IMR-90 (cell line): ENCODE measurements at regions of chr1 and their contacts with region 1.

Region 1: DNA sequence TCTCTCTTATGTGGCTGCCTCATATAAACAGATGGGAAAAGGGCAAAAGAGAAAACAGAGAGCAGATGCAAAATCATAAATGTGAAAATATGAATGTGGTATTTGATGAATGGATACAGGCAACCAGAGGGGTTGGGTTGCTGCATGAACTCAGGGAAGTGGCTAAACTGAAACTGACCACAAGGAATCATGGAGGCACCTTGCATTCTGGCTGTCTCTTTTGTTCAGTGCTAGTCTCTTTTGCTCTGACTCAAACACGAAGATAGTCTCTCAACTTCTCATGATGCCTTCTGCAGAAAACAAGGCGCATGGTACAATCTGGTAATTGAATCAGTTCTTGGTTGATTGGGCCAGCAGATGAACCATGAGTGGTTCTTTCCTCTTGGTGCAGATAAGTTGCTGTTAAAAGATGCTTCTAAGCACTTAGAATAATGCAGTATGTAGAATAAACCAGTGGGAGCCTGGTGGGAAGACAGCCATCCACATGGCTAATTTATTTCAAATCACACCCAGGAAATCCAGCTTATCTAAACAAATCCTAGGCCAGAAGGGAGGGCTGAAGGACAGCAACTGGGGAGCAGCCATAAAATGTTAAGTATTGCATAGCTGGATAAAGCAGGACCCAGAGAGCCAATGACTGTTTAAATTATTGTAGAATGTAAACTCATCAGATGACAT is 64.2 kb downstream of the HLX start:
- DNase-seq: no peak
- ATAC-seq: peak; percentile 29; the same call in 1 of the 2 replicates
- H3K4me3 ChIP-seq: no peak overlapping the region
- H3K27ac ChIP-seq: no peak overlapping the region
- H3K4me1 ChIP-seq: peaks cover 2% of the 10 kb centered on the region; the same call in 1 of the 2 replicates
- H3K27me3 ChIP-seq: no peaks in the 10 kb centered on the region; the same call in 1 of the 2 replicates
- CTCF ChIP-seq: no peak
- POLR2A ChIP-seq: no peak
- RAD21 ChIP-seq: no peak

Region 2: GRCh38 chr1:219518168-219518907 is 1425.1 kb before region 1 on chr1:
- CTCF ChIA-PET with region 1: no interaction called
- POLR2A ChIA-PET with region 1: no interaction called
- dilution Hi-C with region 1: no loop called
- in situ Hi-C with region 1: no loop called
- intact Hi-C with region 1: no loop called
- DNase-seq: peak; percentile 63
- ATAC-seq: peak; percentile 82
- H3K4me3 ChIP-seq: no peak overlapping the region
- H3K27ac ChIP-seq: no peak overlapping the region
- H3K4me1 ChIP-seq: peaks cover 2% of the 10 kb centered on the region; the same call in 1 of the 2 replicates
- H3K27me3 ChIP-seq: no peaks in the 10 kb centered on the region
- CTCF ChIP-seq: no peak
- POLR2A ChIP-seq: no peak
- RAD21 ChIP-seq: no peak

Region 3: DNA sequence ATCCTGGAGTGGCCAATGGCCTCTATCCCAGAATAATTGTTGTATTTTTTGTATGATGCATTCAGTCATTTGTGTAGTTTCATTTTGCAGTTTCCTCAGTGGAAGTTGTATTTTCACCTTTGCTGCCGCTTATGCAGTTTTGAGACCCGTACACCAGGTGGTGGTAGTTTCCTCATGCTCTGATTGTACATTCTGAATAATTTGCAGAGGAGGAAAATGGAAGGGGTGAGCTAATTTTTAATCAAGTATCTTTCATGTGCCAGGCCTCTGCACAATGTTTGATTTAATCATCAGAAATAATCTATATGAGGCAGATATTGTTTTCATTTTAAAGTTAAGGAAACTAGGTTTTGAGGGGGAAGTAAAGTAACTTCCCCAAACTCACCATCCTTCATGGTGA is 34.7 kb before region 1 on chr1:
- CTCF ChIA-PET with region 1: no interaction called
- POLR2A ChIA-PET with region 1: no interaction called
- dilution Hi-C with region 1: no loop called
- in situ Hi-C with region 1: no loop called
- intact Hi-C with region 1: loop called (anchors 2 kb)
- DNase-seq: peak; percentile 44
- ATAC-seq: 0 out of 2 replicates have a peak, but pooled peaks have one; percentile 29
- H3K4me3 ChIP-seq: no peak overlapping the region
- H3K27ac ChIP-seq: no peak overlapping the region
- H3K4me1 ChIP-seq: no peaks in the 10 kb centered on the region
- H3K27me3 ChIP-seq: peaks cover 2% of the 10 kb centered on the region; the same call in 1 of the 2 replicates
- CTCF ChIP-seq: peak; percentile 60
- POLR2A ChIP-seq: no peak
- RAD21 ChIP-seq: peak; percentile 75

Region 4: GRCh38 chr1:220990427-220991339 is 47.2 kb after region 1 on chr1:
- CTCF ChIA-PET with region 1: no interaction called
- POLR2A ChIA-PET with region 1: no interaction called
- dilution Hi-C with region 1: no loop called
- in situ Hi-C with region 1: no loop called
- intact Hi-C with region 1: no loop called
- DNase-seq: peak; percentile 83
- ATAC-seq: peak; percentile 88
- H3K4me3 ChIP-seq: no peak overlapping the region
- H3K27ac ChIP-seq: no peak overlapping the region
- H3K4me1 ChIP-seq: peaks cover 2% of the 10 kb centered on the region
- H3K27me3 ChIP-seq: no peaks in the 10 kb centered on the region
- CTCF ChIP-seq: peak; percentile 38
- POLR2A ChIP-seq: no peak
- RAD21 ChIP-seq: peak; percentile 43